Right cardiac atrium (tissue), 5 donors: ENCODE measurements at regions of chr22 and their contacts with region 1.

Region 1: GRCh38 chr22:24106385-24107381 is 74.6 kb upstream of the SUSD2 start:
- DNase-seq: no peak
- ATAC-seq: peak in 1 of 2 donors; percentile 30
- H3K4me3 ChIP-seq: no peak overlapping the region
- H3K27ac ChIP-seq: peak overlapping the region; percentile 59
- H3K4me1 ChIP-seq: peaks cover 25% of the 10 kb centered on the region
- H3K27me3 ChIP-seq: no peaks in the 10 kb centered on the region

Region 2: DNA sequence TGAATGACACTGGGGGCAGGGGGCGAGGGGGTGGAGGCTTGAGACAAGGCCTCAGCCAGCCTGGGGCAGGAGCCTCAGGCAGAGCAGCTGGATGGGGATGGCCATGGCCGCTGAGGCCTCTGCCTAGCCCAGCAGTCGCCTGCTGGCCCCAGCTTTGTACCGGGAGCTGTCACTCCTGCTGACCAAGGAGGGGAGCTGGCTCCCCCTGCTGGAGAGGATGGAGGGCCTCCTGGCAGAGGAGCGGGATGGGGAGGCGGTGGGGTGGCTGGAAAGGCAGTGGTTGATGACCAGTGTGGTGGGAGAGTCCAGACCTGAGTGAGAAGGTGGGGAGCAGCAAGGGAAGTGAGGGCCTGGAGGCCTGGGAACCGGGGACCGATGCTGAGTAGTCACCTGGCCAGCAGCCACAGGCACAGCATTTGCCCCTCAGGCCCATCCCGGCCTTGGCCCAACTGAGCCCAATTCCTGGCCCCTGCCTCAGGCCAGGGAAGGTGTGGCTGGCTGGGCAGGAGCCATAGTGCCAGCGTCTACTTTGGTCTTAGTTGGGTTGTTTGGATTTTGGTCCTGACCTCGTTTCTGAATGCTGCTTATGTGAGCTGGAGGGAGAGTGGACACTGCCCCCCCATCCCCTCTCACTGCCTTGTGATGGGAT is 68.6 kb after region 1 on chr22:
- intact Hi-C with region 1: loop called (anchors 2 to 5 kb)
- DNase-seq: peak; percentile 88 to 95 (median 95)
- ATAC-seq: peak; percentile 69 to 70
- H3K4me3 ChIP-seq: no peak overlapping the region
- H3K27ac ChIP-seq: peak overlapping the region; percentile 39
- H3K4me1 ChIP-seq: peaks cover 2% of the 10 kb centered on the region
- H3K27me3 ChIP-seq: no peaks in the 10 kb centered on the region

Region 3: GRCh38 chr22:24367841-24368240 is 261.2 kb after region 1 on chr22:
- intact Hi-C with region 1: no loop called
- DNase-seq: no peak
- ATAC-seq: no peak
- H3K4me3 ChIP-seq: no peak overlapping the region
- H3K27ac ChIP-seq: no peak overlapping the region
- H3K4me1 ChIP-seq: no peaks in the 10 kb centered on the region
- H3K27me3 ChIP-seq: no peaks in the 10 kb centered on the region